PC-3 (cell line): ENCODE measurements at regions of chr3 and their contacts with region 1.

Region 1: DNA sequence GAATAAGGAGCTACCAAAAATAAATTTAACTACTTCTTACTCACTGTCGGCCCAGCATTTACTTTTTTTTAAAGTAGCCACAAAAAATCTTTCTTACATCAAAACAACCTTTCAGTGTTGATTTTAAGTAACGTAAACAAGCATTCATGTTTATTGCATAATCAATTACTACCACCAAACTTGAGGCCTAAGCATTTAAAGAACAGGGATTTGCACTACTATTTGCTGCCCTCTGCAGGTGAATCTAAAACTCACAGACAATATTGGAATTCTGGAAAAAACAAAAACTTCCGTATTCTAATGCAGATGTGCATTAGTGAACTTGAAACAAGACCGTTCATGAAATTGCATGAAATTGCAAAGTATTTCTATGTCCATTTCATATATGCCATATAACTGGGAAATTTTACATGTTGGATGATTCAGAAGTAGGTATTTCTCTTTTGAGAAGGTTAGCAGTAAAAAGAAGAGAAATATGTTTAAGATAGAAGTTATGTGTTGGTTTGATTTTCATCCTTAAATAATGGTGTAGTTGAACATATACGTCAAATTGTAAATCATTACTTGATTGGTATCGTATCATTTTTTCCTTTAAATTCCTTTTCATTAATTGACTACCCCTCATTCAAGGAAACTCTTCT is 55.6 kb downstream of the CGGBP1 start:
- DNase-seq: peak; percentile 77
- ATAC-seq: peak; percentile 45; the same call in 1 of the 2 replicates
- H3K4me3 ChIP-seq: no peak overlapping the region
- H3K27ac ChIP-seq: no peak overlapping the region
- H3K4me1 ChIP-seq: no peaks in the 10 kb centered on the region
- H3K27me3 ChIP-seq: no peaks in the 10 kb centered on the region
- CTCF ChIP-seq: peak; percentile 94

Region 2: GRCh38 chr3:86774082-86774691 is 1229.0 kb before region 1 on chr3:
- CTCF ChIA-PET with region 1: interaction called, 5 read pairs
- POLR2A ChIA-PET with region 1: no interaction called
- intact Hi-C with region 1: loop called (anchors 1 kb)
- DNase-seq: peak; percentile 74
- ATAC-seq: peak; percentile 49; the same call in 1 of the 2 replicates
- H3K4me3 ChIP-seq: no peak overlapping the region
- H3K27ac ChIP-seq: no peak overlapping the region
- H3K4me1 ChIP-seq: no peaks in the 10 kb centered on the region
- H3K27me3 ChIP-seq: no peaks in the 10 kb centered on the region
- CTCF ChIP-seq: peak; percentile 79

Region 3: GRCh38 chr3:87298111-87298718 is 705.0 kb before region 1 on chr3:
- CTCF ChIA-PET with region 1: interaction called, 10 read pairs
- POLR2A ChIA-PET with region 1: no interaction called
- intact Hi-C with region 1: loop called (anchors 1 kb)
- DNase-seq: peak; percentile 80
- ATAC-seq: peak; percentile 80
- H3K4me3 ChIP-seq: no peak overlapping the region
- H3K27ac ChIP-seq: no peak overlapping the region
- H3K4me1 ChIP-seq: no peaks in the 10 kb centered on the region
- H3K27me3 ChIP-seq: no peaks in the 10 kb centered on the region
- CTCF ChIP-seq: peak; percentile 92

Region 4: DNA sequence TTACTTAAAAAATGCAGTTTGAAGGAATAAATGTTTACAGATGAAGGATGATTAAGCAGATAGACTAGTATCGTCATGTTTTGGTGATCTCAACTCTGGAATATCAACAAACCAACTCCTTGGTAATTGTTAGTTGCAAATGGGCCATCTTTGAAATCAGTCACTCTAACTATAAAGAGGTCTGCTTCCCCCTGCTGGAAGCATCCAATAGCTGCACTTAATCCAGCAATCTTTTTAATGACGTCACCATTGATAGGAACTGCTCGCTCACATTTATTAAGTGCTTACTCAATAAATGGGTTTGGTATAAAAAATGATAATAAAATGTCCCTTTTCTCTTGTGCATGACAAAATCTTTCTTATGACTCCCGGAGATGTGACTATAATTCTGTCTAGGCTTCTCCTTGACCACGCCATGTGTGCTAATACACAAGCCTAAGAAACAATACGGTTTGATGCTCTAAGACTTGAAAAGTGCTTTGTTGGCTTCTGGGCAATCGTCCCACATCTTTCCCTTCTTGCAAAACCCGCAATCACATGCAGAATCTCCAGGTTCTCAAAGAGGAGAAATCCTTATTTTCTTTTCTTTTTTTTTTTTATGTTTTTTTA is 499.2 kb before region 1 on chr3:
- CTCF ChIA-PET with region 1: interaction called, 3 read pairs
- POLR2A ChIA-PET with region 1: no interaction called
- intact Hi-C with region 1: loop called (anchors 1 kb)
- DNase-seq: peak; percentile 92
- ATAC-seq: peak; percentile 54
- H3K4me3 ChIP-seq: no peak overlapping the region
- H3K27ac ChIP-seq: no peak overlapping the region
- H3K4me1 ChIP-seq: peaks cover 34% of the 10 kb centered on the region
- H3K27me3 ChIP-seq: no peaks in the 10 kb centered on the region
- CTCF ChIP-seq: peak; percentile 96

Region 5: GRCh38 chr3:87771341-87772192 is 231.7 kb before region 1 on chr3:
- CTCF ChIA-PET with region 1: interaction called, 5 read pairs
- POLR2A ChIA-PET with region 1: no interaction called
- intact Hi-C with region 1: loop called (anchors 1 kb)
- DNase-seq: peak; percentile 62
- ATAC-seq: peak; percentile 56
- H3K4me3 ChIP-seq: no peak overlapping the region
- H3K27ac ChIP-seq: no peak overlapping the region
- H3K4me1 ChIP-seq: peaks cover 5% of the 10 kb centered on the region
- H3K27me3 ChIP-seq: no peaks in the 10 kb centered on the region
- CTCF ChIP-seq: peak; percentile 90

Region 6: DNA sequence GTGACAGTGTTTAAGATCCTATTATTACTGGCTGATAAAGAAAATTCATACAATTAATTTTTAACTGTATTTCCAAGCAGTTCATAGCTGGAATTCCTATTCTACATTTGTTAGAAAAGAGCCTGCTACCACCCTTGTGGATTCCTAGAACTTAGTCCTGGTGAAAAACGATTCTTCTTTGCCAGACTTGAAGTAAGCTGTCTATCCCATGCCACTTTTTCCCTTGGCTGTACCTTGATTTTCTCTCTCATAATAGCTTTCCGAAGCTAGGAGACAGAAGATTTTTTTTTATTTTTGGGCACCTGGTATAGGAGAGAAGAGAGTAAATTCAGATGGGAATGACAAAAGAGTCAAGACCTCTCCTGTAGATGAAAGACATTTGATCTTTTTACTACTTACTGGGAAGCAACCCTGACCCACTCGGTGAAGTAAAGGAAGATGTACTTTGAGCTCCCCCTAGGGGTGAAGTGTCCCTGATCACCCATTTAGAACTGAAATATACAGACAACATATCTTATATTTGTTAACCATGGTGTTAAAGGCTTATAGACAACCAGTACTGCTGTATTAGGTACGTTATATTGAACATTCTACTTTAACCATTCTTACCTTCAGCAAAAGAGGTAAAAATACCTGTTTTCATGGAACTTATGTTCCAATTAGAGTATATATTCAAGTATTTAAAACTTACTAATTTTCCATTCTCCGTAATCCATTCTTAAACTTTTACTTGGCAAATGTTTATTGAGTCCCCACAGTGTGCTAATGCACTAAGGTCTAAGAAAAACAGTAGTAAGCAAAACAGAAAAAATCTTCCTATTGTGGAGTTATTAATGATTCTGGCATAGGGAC is 110.3 kb after region 1 on chr3:
- CTCF ChIA-PET with region 1: interaction called, 7 read pairs
- POLR2A ChIA-PET with region 1: no interaction called
- intact Hi-C with region 1: loop called (anchors 1 kb)
- DNase-seq: peak; percentile 86
- ATAC-seq: peak; percentile 97
- H3K4me3 ChIP-seq: no peak overlapping the region
- H3K27ac ChIP-seq: no peak overlapping the region
- H3K4me1 ChIP-seq: no peaks in the 10 kb centered on the region
- H3K27me3 ChIP-seq: no peaks in the 10 kb centered on the region
- CTCF ChIP-seq: peak; percentile 93

Region 7: DNA sequence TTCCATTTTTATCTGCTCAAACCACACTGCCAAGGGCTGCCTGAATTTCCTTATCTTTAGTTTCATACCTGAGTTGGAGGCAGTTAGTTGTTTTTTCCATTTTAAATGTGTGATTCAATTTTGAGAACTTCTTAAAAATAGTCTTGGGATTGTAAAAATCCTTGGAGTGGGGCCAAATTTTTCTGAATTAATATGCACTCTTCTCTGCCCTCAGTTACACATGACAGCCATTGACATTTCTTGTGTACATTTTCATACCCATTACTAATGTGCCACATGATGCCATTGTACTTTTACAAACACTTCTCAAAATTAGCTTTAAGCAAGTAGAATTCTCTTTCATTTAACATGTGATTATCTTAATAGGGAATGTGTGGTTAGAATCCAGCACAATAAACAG is 288.3 kb after region 1 on chr3:
- CTCF ChIA-PET with region 1: no interaction called
- POLR2A ChIA-PET with region 1: no interaction called
- intact Hi-C with region 1: no loop called
- DNase-seq: no peak
- ATAC-seq: no peak
- H3K4me3 ChIP-seq: no peak overlapping the region
- H3K27ac ChIP-seq: no peak overlapping the region
- H3K4me1 ChIP-seq: no peaks in the 10 kb centered on the region
- H3K27me3 ChIP-seq: peaks cover 34% of the 10 kb centered on the region
- CTCF ChIP-seq: no peak